Activated naive CD8-positive, alpha-beta T cell treated with anti-CD3 and anti-CD28 coated beads, Interleukin-2, amount 10 ng/mL, durations not matched to agents 7 days and 5 days (primary cell): ENCODE measurements at regions of chr2 and their contacts with region 1.

Region 1: GRCh38 chr2:64653349-64654062 is at the start of gene SERTAD2:
- DNase-seq: peak; percentile 88
- ATAC-seq: peak; percentile 87
- H3K4me3 Mint-ChIP-seq: peak within 1 kb of the TSS; percentile 90
- H3K27ac Mint-ChIP-seq: peak within 1 kb of the TSS; percentile 90
- H3K4me1 Mint-ChIP-seq: peaks cover 57% of the 10 kb centered on the region
- H3K27me3 Mint-ChIP-seq: no peaks in the 10 kb centered on the region
- total RNA-seq, gene SERTAD2: 27.0 to 27.7 TPM

Region 2: GRCh38 chr2:64532030-64532429 is 121.5 kb before region 1 on chr2:
- POLR2A ChIA-PET with region 1: no interaction called
- DNase-seq: no peak
- ATAC-seq: no peak
- H3K4me3 Mint-ChIP-seq: no peak overlapping the region
- H3K27ac Mint-ChIP-seq: no peak overlapping the region
- H3K4me1 Mint-ChIP-seq: peaks cover 36% of the 10 kb centered on the region
- H3K27me3 Mint-ChIP-seq: no peaks in the 10 kb centered on the region

Region 3: DNA sequence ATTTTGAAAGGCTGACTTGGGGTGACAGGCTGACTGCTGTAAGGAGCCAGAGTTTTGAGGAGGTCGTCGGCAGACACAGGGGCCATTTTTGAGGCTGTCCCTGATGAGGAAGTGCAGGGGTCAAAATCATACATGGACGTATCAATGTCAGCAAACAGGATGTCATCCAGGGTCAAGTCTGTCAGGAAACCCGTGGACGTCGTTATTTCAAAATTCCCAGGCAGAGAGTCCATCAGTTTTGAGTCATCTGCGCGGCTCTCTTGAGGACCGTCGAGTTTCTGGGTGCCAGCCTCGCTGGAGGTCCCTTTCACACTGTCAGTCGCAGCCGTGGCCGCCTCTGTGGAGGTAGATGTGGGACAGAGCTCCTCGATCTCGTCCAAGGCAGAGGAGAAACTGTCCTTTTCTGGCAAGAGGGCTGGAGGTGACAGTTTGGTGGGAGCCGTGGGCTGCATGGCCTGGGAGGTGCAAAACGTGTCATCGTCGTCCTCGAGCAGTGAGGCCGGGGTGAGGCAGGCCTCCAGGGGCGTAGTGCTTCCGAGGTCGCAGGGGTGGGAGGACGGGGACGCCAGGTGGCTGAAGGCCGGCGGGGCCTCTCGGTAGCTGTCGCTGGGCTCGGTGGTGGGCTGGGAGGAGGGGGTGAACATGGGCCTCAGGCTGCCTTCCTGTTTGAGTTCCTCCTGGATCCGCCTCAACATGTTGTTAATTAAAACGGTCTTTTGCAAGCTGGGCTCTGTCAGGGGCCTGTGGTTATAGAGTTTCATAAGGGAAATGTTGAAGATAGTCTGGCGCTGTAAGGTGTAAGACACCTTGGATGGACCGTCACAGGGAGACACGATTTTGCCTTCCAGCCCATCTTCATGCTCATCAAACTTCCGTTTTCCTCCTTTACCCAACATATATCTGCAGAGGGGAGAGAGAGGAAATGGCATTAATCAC is 17.3 kb before region 1 on chr2:
- POLR2A ChIA-PET with region 1: interaction called, 16 read pairs
- DNase-seq: no peak
- ATAC-seq: peak; percentile 60
- H3K4me3 Mint-ChIP-seq: peak overlapping the region; percentile 73
- H3K27ac Mint-ChIP-seq: peak overlapping the region; percentile 83
- H3K4me1 Mint-ChIP-seq: peaks cover 51% of the 10 kb centered on the region
- H3K27me3 Mint-ChIP-seq: no peaks in the 10 kb centered on the region

Region 4: DNA sequence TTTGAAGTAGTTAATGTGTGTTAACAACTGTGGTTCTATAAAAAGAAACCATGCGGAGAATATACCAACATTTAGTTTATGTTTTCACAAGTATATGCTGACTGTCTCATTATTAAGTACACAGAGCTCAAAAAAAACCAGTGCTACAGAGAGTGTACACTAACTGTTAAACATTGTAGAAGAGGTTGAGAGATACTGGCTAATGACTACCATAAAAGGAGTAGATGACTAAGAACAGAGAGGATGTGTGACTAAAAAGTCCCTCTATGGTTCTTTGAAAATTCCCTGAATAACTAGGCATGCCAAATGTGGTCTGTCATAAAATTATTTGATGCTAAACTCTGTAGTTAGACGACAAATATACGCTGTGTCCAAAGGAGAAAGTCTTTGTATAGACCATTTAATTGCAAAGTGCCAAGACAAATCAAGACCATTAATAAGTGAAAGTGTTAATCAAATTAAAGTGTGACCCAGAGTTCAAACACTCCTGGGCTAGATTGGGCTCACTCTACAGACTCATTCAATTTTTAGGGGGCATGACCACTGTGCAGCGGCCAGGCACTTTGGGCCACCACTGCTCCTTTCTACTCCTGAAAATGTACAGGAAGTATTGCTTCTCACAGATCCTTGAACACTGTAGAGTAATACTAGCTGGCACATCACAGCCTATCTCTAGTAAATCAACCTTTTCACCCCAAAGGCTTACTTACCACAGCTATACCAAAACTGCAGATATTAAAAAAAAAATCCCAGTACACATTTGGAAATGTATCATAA is 45.4 kb after region 1 on chr2:
- POLR2A ChIA-PET with region 1: interaction called, 15 read pairs
- DNase-seq: no peak
- ATAC-seq: peak; percentile 93
- H3K4me3 Mint-ChIP-seq: peak overlapping the region; percentile 60
- H3K27ac Mint-ChIP-seq: peak overlapping the region; percentile 62
- H3K4me1 Mint-ChIP-seq: peaks cover 43% of the 10 kb centered on the region
- H3K27me3 Mint-ChIP-seq: no peaks in the 10 kb centered on the region

Region 5: GRCh38 chr2:64737547-64737946 is 84.0 kb after region 1 on chr2:
- POLR2A ChIA-PET with region 1: interaction called, 86 read pairs
- DNase-seq: no peak
- ATAC-seq: peak; percentile 91
- H3K4me3 Mint-ChIP-seq: peak overlapping the region; percentile 40
- H3K27ac Mint-ChIP-seq: peak overlapping the region; percentile 36
- H3K4me1 Mint-ChIP-seq: peaks cover 29% of the 10 kb centered on the region
- H3K27me3 Mint-ChIP-seq: no peaks in the 10 kb centered on the region

Region 6: GRCh38 chr2:64767670-64768468 is 114.4 kb after region 1 on chr2:
- POLR2A ChIA-PET with region 1: interaction called, 52 read pairs
- DNase-seq: peak; percentile 83
- ATAC-seq: peak; percentile 85
- H3K4me3 Mint-ChIP-seq: peak overlapping the region; percentile 91
- H3K27ac Mint-ChIP-seq: peak overlapping the region; percentile 96
- H3K4me1 Mint-ChIP-seq: peaks cover 31% of the 10 kb centered on the region
- H3K27me3 Mint-ChIP-seq: no peaks in the 10 kb centered on the region